MCF 10A (cell line): ENCODE measurements at regions of chr2 and their contacts with region 1.

Region 1: GRCh38 chr2:172408143-172408766 is 19.1 kb upstream of the ITGA6 start:
- DNase-seq: peak; percentile 97
- H3K4me3 Mint-ChIP-seq: peak overlapping the region; percentile 22
- H3K27ac Mint-ChIP-seq: peak overlapping the region; percentile 88
- H3K4me1 Mint-ChIP-seq: peaks cover 37% of the 10 kb centered on the region
- H3K27me3 Mint-ChIP-seq: no peaks in the 10 kb centered on the region
- CTCF ChIP-seq: no peak

Region 2: DNA sequence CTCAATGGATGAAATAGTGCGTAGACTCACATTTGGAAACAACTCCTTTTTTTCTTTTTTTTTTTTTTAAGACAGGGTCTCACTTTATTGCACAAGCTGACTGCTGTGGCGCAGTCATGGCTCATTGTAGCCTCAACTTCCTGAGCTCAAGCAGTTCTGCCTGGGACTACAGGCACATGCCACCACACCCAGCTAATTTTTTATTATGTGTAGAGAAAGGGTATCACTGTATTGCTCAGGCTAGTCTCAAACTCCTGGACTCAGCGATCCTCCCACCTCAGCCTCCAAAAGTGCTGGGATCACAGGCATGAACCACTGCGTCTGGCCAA is 468.5 kb before region 1 on chr2:
- CTCF ChIA-PET with region 1: no interaction called
- POLR2A ChIA-PET with region 1: no interaction called
- intact Hi-C with region 1: no loop called
- DNase-seq: no peak
- H3K4me3 Mint-ChIP-seq: no peak overlapping the region
- H3K27ac Mint-ChIP-seq: no peak overlapping the region
- H3K4me1 Mint-ChIP-seq: peaks cover 11% of the 10 kb centered on the region
- H3K27me3 Mint-ChIP-seq: no peaks in the 10 kb centered on the region
- CTCF ChIP-seq: no peak

Region 3: GRCh38 chr2:172442072-172442895 is 34.0 kb after region 1 on chr2:
- CTCF ChIA-PET with region 1: interaction called, 4 read pairs
- POLR2A ChIA-PET with region 1: interaction called, 19 read pairs
- intact Hi-C with region 1: no loop called
- DNase-seq: peak; percentile 99
- H3K4me3 Mint-ChIP-seq: peak overlapping the region; percentile 65
- H3K27ac Mint-ChIP-seq: peak overlapping the region; percentile 98
- H3K4me1 Mint-ChIP-seq: peaks cover 45% of the 10 kb centered on the region
- H3K27me3 Mint-ChIP-seq: no peaks in the 10 kb centered on the region
- CTCF ChIP-seq: no peak